Endothelial cell of umbilical vein (primary cell): ENCODE measurements at regions of chr11 and their contacts with region 1.

Region 1: DNA sequence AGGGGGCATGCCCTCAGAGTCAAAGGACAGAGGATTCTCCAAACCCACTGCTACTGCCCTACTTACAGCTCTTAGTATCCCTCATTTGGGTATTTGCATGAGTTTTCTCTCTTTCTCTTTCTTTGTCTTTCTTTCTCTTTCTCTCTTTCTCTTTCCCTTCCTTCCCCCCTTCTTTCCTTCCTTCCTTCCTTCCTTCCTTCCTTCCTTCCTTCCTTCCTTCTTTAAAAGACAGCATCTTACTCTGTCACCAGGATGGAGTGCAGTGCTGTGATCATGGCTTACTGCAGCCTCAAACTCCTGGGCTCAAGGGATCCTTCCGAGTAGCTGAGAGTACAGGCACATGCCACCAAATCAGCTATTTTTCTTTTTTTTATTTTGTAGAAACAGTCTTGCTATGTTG is 14.0 kb upstream of the MMP7 start:
- DNase-seq: no peak
- H3K4me3 ChIP-seq: no peak overlapping the region
- H3K27ac ChIP-seq: no peak overlapping the region
- H3K4me1 ChIP-seq: no peaks in the 10 kb centered on the region
- H3K27me3 ChIP-seq: no peaks in the 10 kb centered on the region
- CTCF ChIP-seq: no peak
- POLR2A ChIP-seq: no peak

Region 2: DNA sequence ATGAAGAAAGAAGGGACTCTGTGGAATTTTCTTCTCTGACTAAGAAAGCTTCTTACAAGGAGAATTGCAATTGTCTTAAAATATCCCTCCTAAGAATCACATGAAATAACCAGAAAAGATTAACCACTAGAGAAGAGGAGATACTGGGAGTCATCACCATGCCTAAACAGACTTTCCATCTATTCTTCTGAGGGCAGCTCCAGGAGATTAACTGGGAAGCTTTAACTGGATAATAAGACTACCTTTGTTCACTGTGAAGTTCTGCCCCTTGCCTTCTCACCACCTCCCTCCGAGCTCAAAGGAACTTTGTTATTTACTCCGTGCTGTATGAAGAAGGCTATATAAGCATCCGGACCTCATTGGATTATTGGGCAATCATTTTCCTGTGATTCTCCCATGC is 10.5 kb after region 1 on chr11:
- CTCF ChIA-PET with region 1: interaction called, 10 read pairs
- POLR2A ChIA-PET with region 1: no interaction called
- dilution Hi-C with region 1: no loop called
- intact Hi-C with region 1: no loop called
- DNase-seq: no peak
- H3K4me3 ChIP-seq: no peak overlapping the region
- H3K27ac ChIP-seq: no peak overlapping the region
- H3K4me1 ChIP-seq: no peaks in the 10 kb centered on the region
- H3K27me3 ChIP-seq: no peaks in the 10 kb centered on the region
- CTCF ChIP-seq: no peak
- POLR2A ChIP-seq: no peak